ENCODE measurements at regions of chr17 and their contacts with region 1.

Region 1: GRCh38 chr17:49997791-49998703 is 3.0 kb upstream of the DLX3 start:
- DNase-seq: peak; percentile 92 to 95
- ATAC-seq: peak; percentile 73 to 88
- H3K4me3 ChIP-seq: no peak overlapping the region
- H3K27ac ChIP-seq: peak overlapping the region; percentile 54 to 71
- H3K4me1 ChIP-seq: peaks cover 29% of the 10 kb centered on the region
- CTCF ChIP-seq: peak; percentile 99
- EP300 ChIP-seq: no peak
- POLR2A ChIP-seq: no peak
- RAD21 ChIP-seq: peak; percentile 99

Region 2: GRCh38 chr17:49567871-49568694 is 430.0 kb before region 1 on chr17:
- CTCF ChIA-PET with region 1: interaction called, 95 read pairs
- POLR2A ChIA-PET with region 1: no interaction called
- DNase-seq: peak; percentile 78 to 92
- ATAC-seq: peak; percentile 63 to 84
- H3K4me3 ChIP-seq: peak overlapping the region; percentile 48
- H3K27ac ChIP-seq: peak overlapping the region; percentile 61 to 82; a peak in 5 of 6 replicates
- H3K4me1 ChIP-seq: no peaks in the 10 kb centered on the region; the same call in 2 of the 3 replicates
- CTCF ChIP-seq: peak; percentile 97
- EP300 ChIP-seq: no peak
- POLR2A ChIP-seq: no peak
- RAD21 ChIP-seq: peak; percentile 99

Region 3: GRCh38 chr17:49723423-49723822 is 274.6 kb before region 1 on chr17:
- CTCF ChIA-PET with region 1: interaction called, 26 read pairs
- POLR2A ChIA-PET with region 1: no interaction called
- DNase-seq: no peak
- ATAC-seq: no peak
- H3K4me3 ChIP-seq: no peak overlapping the region
- H3K27ac ChIP-seq: no peak overlapping the region
- H3K4me1 ChIP-seq: no peaks in the 10 kb centered on the region
- CTCF ChIP-seq: no peak
- EP300 ChIP-seq: no peak
- POLR2A ChIP-seq: no peak
- RAD21 ChIP-seq: no peak

Region 4: GRCh38 chr17:49880291-49881053 is 117.6 kb before region 1 on chr17:
- CTCF ChIA-PET with region 1: interaction called, 1,602 read pairs
- POLR2A ChIA-PET with region 1: interaction called, 3 read pairs
- DNase-seq: peak; percentile 84 to 99
- ATAC-seq: peak; percentile 94 to 98
- H3K4me3 ChIP-seq: peak overlapping the region; percentile 32
- H3K27ac ChIP-seq: peak overlapping the region in 1 of 2 experiments; percentile 66; a peak in 3 of 6 replicates
- H3K4me1 ChIP-seq: peaks cover 5% of the 10 kb centered on the region; the same call in 1 of the 3 replicates
- CTCF ChIP-seq: peak; percentile 83
- EP300 ChIP-seq: no peak
- POLR2A ChIP-seq: no peak
- RAD21 ChIP-seq: peak; percentile 88 to 90

Region 5: GRCh38 chr17:49987681-49988441 is 10.2 kb before region 1 on chr17:
- CTCF ChIA-PET with region 1: interaction called, 365 read pairs
- POLR2A ChIA-PET with region 1: no interaction called
- DNase-seq: peak in 1 of 2 experiments; percentile 59
- ATAC-seq: peak; percentile 52 to 81; a peak in 5 of 6 replicates
- H3K4me3 ChIP-seq: no peak overlapping the region
- H3K27ac ChIP-seq: peak overlapping the region in 1 of 2 experiments; percentile 41; a peak in 2 of 6 replicates
- H3K4me1 ChIP-seq: peaks cover 12% of the 10 kb centered on the region
- CTCF ChIP-seq: no peak
- EP300 ChIP-seq: no peak
- POLR2A ChIP-seq: no peak
- RAD21 ChIP-seq: no peak

Region 6: DNA sequence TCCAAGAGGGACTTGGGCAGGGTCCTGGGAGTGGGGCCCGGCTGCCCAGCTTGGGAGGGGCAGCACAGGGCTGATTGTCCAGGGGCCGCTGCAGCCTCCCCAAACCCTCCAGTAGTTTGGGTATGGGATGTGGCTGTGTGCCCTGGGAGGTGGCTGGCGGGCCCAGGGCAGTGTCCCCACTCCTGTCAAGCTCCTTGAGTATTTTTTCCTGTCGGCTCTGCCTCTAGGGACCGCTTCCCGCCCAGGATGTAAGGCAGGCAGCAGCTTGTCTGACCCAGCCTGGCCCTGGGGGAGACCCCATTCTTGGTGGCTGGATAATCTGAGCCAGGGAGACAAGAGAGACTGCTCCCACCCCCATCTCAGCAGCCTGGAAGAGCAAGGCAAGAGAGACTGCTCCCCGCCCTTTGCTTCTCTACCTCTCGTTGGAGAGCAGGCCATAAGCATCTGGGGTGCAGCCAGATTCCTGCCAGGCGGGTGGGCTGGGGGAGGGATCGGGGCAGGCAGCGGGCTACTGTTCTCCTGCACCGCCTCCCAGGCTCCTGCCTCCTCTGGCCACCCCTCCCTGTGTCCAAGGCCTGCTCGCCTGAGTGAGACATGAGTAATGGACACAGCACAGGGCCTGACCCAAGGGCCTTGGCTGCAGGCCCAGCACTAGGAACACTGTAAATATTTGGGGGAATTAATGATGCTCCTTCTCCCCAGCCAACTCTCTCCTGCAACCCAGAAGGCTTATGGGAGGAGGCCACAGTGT is 39.4 kb after region 1 on chr17:
- CTCF ChIA-PET with region 1: interaction called, 15 read pairs
- POLR2A ChIA-PET with region 1: no interaction called
- DNase-seq: peak in 1 of 2 experiments; percentile 77
- ATAC-seq: peak; percentile 85 to 94
- H3K4me3 ChIP-seq: no peak overlapping the region
- H3K27ac ChIP-seq: peak overlapping the region; percentile 82 to 88
- H3K4me1 ChIP-seq: peaks cover 43% of the 10 kb centered on the region
- CTCF ChIP-seq: no peak
- EP300 ChIP-seq: peak in 1 of 2 experiments; percentile 46; a peak in 1 of 5 replicates
- POLR2A ChIP-seq: no peak
- RAD21 ChIP-seq: 0 out of 5 replicates have a peak, but pooled peaks have one; percentile 16 to 22

Region 7: DNA sequence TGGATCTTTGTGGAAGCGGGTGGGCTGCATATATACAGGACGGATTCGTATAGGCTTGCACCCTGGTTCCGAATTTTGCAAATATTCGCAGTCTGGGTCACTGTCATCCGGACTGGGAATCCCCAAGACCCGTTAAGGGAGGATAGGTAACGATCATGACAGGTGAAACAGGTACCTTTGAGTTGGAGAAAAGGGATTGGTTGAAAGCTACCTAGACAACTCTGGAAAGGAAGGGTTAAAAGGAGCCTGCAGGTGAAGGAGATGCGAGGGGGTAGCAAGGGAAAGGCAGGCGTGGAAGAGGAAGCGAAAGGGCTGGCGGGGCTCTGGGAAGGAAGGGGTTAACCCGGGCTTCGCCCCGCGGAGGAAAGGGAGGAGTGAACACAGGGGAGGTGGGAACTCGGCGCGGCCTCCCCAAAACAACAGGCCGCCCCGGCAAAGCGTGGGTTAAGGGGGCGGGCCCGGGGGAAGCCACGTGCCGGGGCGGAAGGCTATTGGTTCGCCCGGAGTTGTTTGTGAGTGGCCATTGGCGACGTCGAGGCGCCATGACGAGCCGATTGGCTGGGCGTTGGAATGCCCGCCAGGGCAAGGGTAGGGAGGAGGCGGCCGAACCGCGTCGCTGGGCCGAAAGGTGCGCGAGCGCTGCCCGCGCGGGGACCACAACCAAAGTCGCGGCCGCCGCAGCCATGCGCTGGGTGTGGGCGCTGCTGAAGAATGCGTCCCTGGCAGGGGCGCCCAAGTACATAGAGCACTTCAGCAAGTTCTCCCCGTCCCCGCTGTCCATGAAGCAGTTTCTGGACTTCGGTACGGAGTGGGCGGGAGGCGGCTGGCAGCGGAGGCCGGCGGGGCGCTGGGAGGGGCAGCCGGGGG is 96.9 kb after region 1 on chr17 and contains the start of gene PDK2:
- CTCF ChIA-PET with region 1: interaction called, 80 read pairs
- POLR2A ChIA-PET with region 1: no interaction called
- DNase-seq: peak; percentile 98 to 99
- ATAC-seq: peak; percentile 67 to 94
- H3K4me3 ChIP-seq: peak within 1 kb of the TSS; percentile 76
- H3K27ac ChIP-seq: peak within 1 kb of the TSS; percentile 82 to 90
- H3K4me1 ChIP-seq: peaks cover 20% of the 10 kb centered on the region
- CTCF ChIP-seq: no peak
- EP300 ChIP-seq: no peak
- POLR2A ChIP-seq: peak; percentile 46
- RAD21 ChIP-seq: no peak
- polyA plus RNA-seq, gene PDK2: 28.5 and 34.4 TPM in 2 replicates

Region 8: GRCh38 chr17:50184064-50184463 is 186.0 kb after region 1 on chr17:
- CTCF ChIA-PET with region 1: no interaction called
- POLR2A ChIA-PET with region 1: no interaction called
- DNase-seq: no peak
- ATAC-seq: peak in 1 of 2 experiments; percentile 27; a peak in 3 of 6 replicates
- H3K4me3 ChIP-seq: no peak overlapping the region
- H3K27ac ChIP-seq: peak overlapping the region; percentile 37 to 67; a peak in 4 of 6 replicates
- H3K4me1 ChIP-seq: peaks cover 23% of the 10 kb centered on the region
- CTCF ChIP-seq: no peak
- EP300 ChIP-seq: no peak
- POLR2A ChIP-seq: no peak
- RAD21 ChIP-seq: no peak

Measured in A549 (cell line).